ENCODE measurements at regions of chr2 and their contacts with region 1.

Region 1: GRCh38 chr2:174395284-174395968 is at the start of gene SCRN3:
- DNase-seq: peak; percentile 74
- H3K4me3 Mint-ChIP-seq: peak within 1 kb of the TSS; percentile 95
- H3K27ac Mint-ChIP-seq: peak within 1 kb of the TSS; percentile 97
- H3K4me1 Mint-ChIP-seq: peaks cover 44% of the 10 kb centered on the region
- H3K27me3 Mint-ChIP-seq: no peaks in the 10 kb centered on the region
- total RNA-seq, gene SCRN3: 14.0 and 19.8 TPM in 2 replicates

Region 2: GRCh38 chr2:174039551-174040416 is 355.6 kb before region 1 on chr2:
- intact Hi-C with region 1: loop called (anchors 1 kb)
- DNase-seq: peak; percentile 72
- H3K4me3 Mint-ChIP-seq: peak overlapping the region; percentile 40
- H3K27ac Mint-ChIP-seq: peak overlapping the region; percentile 89
- H3K4me1 Mint-ChIP-seq: peaks cover 16% of the 10 kb centered on the region
- H3K27me3 Mint-ChIP-seq: no peaks in the 10 kb centered on the region

Region 3: DNA sequence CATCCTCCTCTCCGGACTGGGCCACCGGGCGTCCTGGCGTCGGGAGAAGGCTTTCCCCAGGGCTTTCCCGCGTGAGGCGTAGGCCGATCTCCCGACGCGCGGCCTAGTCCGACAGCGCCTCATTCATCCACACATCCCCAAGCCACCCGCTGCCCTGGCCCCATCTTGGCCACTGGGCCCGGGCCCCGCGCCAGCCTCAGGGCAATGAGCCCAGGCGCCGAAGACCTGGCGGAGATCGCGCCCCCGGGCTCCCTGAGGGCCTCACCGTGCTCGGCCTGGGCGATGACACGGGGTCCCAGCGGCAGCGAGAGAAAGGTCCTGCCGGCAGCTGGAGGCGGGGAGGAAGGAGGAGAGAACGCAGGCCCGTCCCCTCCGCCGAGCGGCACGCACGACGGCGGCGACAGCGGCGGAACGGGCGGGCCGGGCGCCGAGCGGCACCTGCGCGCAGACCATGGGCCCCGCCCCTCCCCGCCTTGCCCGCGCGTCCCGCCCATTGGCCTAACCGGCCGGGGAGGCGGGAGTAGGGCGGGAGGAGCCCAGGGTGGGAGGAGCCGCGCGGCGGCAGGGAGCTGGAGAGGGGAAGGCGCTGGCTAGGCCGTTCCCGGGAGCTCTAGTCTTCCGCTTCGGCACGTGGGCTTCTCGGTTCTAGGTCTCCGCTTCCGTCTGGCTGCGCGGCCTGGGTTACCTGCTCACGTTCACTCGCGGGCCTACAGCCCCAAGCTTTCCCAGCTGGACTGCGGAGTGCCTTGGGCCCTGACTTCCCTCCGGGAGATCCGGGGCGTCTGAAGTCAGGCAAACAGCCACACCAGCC is 147.0 kb before region 1 on chr2 and contains the start of gene OLA1:
- intact Hi-C with region 1: loop called (anchors 1 kb)
- DNase-seq: peak; percentile 95
- H3K4me3 Mint-ChIP-seq: peak within 1 kb of the TSS; percentile 83
- H3K27ac Mint-ChIP-seq: peak within 1 kb of the TSS; percentile 79
- H3K4me1 Mint-ChIP-seq: peaks cover 26% of the 10 kb centered on the region
- H3K27me3 Mint-ChIP-seq: no peaks in the 10 kb centered on the region
- total RNA-seq, gene OLA1: 132 and 139 TPM in 2 replicates

Region 4: GRCh38 chr2:174553811-174554493 is 158.5 kb after region 1 on chr2:
- intact Hi-C with region 1: no loop called
- DNase-seq: no peak
- H3K4me3 Mint-ChIP-seq: no peak overlapping the region
- H3K27ac Mint-ChIP-seq: peak overlapping the region; percentile 71
- H3K4me1 Mint-ChIP-seq: peaks cover 34% of the 10 kb centered on the region
- H3K27me3 Mint-ChIP-seq: no peaks in the 10 kb centered on the region

Region 5: DNA sequence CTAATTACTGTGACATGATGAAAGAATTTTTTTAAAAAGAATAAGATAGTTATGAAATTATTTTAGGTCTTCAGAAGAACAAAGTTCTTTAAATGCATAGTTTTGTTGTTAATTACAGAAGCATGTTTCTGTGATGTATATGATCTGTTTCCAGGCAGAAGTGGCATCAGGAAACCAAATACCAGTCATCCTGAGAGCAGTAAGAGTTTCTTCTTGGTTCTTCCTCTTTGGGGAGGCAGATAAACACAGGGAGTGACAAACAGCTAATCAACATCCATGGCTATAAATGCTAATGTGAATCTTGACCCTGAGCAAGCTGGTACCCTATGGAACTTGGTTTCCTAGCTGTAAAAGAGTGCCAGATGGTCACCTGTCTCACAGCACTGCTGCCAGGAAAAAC is 173.0 kb after region 1 on chr2:
- intact Hi-C with region 1: loop called (anchors 5 kb)
- DNase-seq: no peak
- H3K4me3 Mint-ChIP-seq: no peak overlapping the region
- H3K27ac Mint-ChIP-seq: peak overlapping the region; percentile 45
- H3K4me1 Mint-ChIP-seq: peaks cover 62% of the 10 kb centered on the region
- H3K27me3 Mint-ChIP-seq: no peaks in the 10 kb centered on the region

Region 6: GRCh38 chr2:174682578-174683391 is 287.4 kb after region 1 on chr2:
- intact Hi-C with region 1: loop called (anchors 5 kb)
- DNase-seq: peak; percentile 57
- H3K4me3 Mint-ChIP-seq: peak overlapping the region; percentile 96
- H3K27ac Mint-ChIP-seq: peak overlapping the region; percentile 95
- H3K4me1 Mint-ChIP-seq: peaks cover 74% of the 10 kb centered on the region
- H3K27me3 Mint-ChIP-seq: no peaks in the 10 kb centered on the region

Region 7: GRCh38 chr2:175181104-175181876 is 785.9 kb after region 1 on chr2 and contains the start of gene ATP5MC3:
- intact Hi-C with region 1: loop called (anchors 10 kb)
- DNase-seq: peak; percentile 89
- H3K4me3 Mint-ChIP-seq: peak within 1 kb of the TSS; percentile 89
- H3K27ac Mint-ChIP-seq: peak within 1 kb of the TSS; percentile 84
- H3K4me1 Mint-ChIP-seq: peaks cover 22% of the 10 kb centered on the region
- H3K27me3 Mint-ChIP-seq: no peaks in the 10 kb centered on the region
- total RNA-seq, gene ATP5MC3: 365 and 380 TPM in 2 replicates

Measured in activated T-helper 1 cell treated with anti-CD3 and anti-CD28 coated beads, Interleukin-12 subunit alpha, Interleukin-12 subunit beta, Interleukin-2, Interleukin-4 antibody, amounts not matched to agents 30 ng/mL and 10 ng/mL and 1 ng/mL, durations not matched to agents 14 hours and 24 hours and 36 hours (primary cell).